PC-9 (cell line): ENCODE measurements at regions of chr2 and their contacts with region 1.

Region 1: GRCh38 chr2:119641562-119642258 is 37.3 kb upstream of the TMEM177 start:
- DNase-seq: peak; percentile 56 to 72
- H3K4me3 ChIP-seq: no peak overlapping the region
- H3K27ac ChIP-seq: no peak overlapping the region
- H3K4me1 ChIP-seq: peaks cover 10% of the 10 kb centered on the region
- H3K27me3 ChIP-seq: peaks cover 8% of the 10 kb centered on the region; the same call in 1 of the 2 replicates
- CTCF ChIP-seq: peak; percentile 95

Region 2: DNA sequence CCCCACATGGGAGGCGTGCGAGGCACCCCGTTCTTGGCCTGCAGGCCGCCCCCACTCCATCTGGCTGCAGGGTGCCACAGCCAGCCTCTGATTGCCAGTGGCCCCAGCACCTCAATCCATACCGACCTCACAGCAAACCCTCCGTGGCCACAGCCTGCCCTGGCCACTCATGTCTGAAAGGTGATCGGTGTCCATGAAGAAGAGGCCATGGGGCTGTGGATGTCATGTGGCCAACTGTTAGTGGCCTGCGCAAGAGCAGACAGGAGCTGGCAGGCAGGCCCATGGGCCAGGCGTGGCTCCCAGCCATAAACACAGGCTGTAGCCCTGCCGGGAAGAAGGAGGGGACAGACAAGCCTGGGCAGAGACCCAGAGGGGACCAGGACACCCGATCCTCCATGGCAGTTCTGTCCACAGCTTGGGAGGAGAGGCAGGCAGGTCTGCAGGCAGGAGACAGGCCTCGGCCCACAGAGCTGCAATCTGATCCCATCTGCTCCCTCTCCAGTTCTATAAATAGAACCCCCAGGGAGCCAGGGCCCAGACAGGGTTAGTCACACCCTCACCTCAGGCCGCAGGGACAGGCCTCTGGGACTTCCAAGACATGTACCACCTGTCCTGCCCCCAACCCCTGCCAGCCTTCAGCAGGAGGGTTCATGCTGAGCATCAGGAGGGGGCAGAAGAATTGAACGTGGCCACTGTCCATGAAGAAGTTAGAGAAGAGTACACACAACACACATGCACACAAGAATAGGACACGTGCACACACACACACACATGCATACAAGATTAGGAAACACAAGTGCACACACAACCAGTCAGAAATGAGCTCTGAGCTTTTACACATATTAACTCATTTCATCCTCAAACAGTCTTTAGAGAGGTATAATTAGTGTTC is 401.2 kb before region 1 on chr2:
- CTCF ChIA-PET with region 1: no interaction called
- POLR2A ChIA-PET with region 1: no interaction called
- intact Hi-C with region 1: no loop called
- DNase-seq: peak; percentile 79 to 93
- H3K4me3 ChIP-seq: no peak overlapping the region
- H3K27ac ChIP-seq: no peak overlapping the region
- H3K4me1 ChIP-seq: peaks cover 25% of the 10 kb centered on the region
- H3K27me3 ChIP-seq: no peaks in the 10 kb centered on the region
- CTCF ChIP-seq: no peak

Region 3: DNA sequence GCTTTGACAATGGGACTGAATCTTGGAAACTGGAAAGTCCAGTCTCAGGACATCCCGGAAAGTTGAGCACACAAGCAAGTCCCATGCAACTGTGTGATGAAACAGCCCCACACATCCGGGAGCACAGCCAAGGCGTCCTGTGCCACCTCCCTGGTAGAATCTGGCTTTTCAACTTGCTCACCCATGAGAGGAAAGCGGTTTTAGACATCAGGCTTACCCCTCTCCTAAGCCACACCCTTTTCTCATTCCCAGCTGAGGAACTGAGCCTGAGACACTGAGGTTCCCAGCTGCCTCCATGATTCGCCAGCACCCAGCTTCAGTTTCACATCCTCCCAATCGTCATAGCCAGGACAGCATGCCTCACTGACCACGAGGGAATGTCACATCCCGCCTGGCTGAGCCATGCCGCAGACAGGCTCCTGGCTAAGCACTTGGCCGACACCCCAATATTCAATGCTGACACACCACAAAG is 357.8 kb before region 1 on chr2:
- CTCF ChIA-PET with region 1: no interaction called
- POLR2A ChIA-PET with region 1: no interaction called
- intact Hi-C with region 1: no loop called
- DNase-seq: peak; percentile 82 to 97
- H3K4me3 ChIP-seq: peak overlapping the region; percentile 6; the same call in 1 of the 2 replicates
- H3K27ac ChIP-seq: peak overlapping the region; percentile 71
- H3K4me1 ChIP-seq: peaks cover 18% of the 10 kb centered on the region
- H3K27me3 ChIP-seq: no peaks in the 10 kb centered on the region
- CTCF ChIP-seq: no peak

Region 4: DNA sequence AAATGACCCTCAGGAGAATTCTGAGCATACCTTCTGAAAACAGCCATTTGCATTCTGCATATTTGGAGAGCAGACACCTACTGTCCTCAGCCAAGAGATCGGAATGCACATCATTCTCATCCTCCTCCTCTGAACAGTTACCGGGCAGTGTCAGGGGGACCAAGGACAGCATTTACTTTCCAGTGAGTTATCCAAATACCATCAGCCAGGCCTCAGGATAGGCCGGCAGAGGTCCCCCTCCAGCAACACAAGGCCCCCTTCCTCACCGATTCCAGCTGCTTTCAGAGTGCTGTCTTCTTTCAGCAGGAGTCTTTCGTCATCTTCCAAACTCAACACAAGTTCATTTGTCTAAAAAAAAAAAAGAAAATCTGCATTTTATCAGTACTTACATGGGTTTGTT is 330.4 kb before region 1 on chr2:
- CTCF ChIA-PET with region 1: interaction called, 10 read pairs
- POLR2A ChIA-PET with region 1: no interaction called
- intact Hi-C with region 1: no loop called
- DNase-seq: no peak
- H3K4me3 ChIP-seq: no peak overlapping the region
- H3K27ac ChIP-seq: no peak overlapping the region
- H3K4me1 ChIP-seq: peaks cover 19% of the 10 kb centered on the region
- H3K27me3 ChIP-seq: no peaks in the 10 kb centered on the region
- CTCF ChIP-seq: no peak

Region 5: GRCh38 chr2:119446037-119446436 is 195.7 kb before region 1 on chr2:
- CTCF ChIA-PET with region 1: interaction called, 10 read pairs
- POLR2A ChIA-PET with region 1: no interaction called
- intact Hi-C with region 1: no loop called
- DNase-seq: no peak
- H3K4me3 ChIP-seq: no peak overlapping the region
- H3K27ac ChIP-seq: no peak overlapping the region
- H3K4me1 ChIP-seq: no peaks in the 10 kb centered on the region
- H3K27me3 ChIP-seq: peaks cover 44% of the 10 kb centered on the region
- CTCF ChIP-seq: no peak

Region 6: GRCh38 chr2:119826370-119826961 is 184.8 kb after region 1 on chr2:
- CTCF ChIA-PET with region 1: no interaction called
- POLR2A ChIA-PET with region 1: no interaction called
- intact Hi-C with region 1: loop called (anchors 5 kb)
- DNase-seq: no peak
- H3K4me3 ChIP-seq: no peak overlapping the region
- H3K27ac ChIP-seq: no peak overlapping the region
- H3K4me1 ChIP-seq: no peaks in the 10 kb centered on the region
- H3K27me3 ChIP-seq: no peaks in the 10 kb centered on the region
- CTCF ChIP-seq: peak; percentile 65

Region 7: DNA sequence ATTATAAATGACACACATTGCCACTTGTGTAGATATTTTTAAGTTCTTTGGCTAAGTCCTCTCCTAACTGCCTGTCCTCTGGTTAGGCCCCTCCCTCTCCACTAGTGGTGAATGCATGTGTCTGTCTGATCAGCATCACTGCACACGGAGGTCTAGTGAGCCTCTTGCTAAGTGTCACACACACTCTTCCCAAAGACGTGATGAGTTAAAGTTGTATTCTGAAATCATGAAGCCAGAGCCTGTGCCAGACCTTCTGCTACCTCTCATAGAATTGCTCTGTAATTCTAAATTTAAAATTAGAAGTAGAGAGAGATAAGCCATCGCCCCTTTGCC is 652.3 kb after region 1 on chr2:
- CTCF ChIA-PET with region 1: interaction called, 15 read pairs
- POLR2A ChIA-PET with region 1: no interaction called
- intact Hi-C with region 1: no loop called
- DNase-seq: no peak
- H3K4me3 ChIP-seq: no peak overlapping the region
- H3K27ac ChIP-seq: no peak overlapping the region
- H3K4me1 ChIP-seq: peaks cover 39% of the 10 kb centered on the region
- H3K27me3 ChIP-seq: no peaks in the 10 kb centered on the region
- CTCF ChIP-seq: no peak